ENCODE measurements at regions of chr11 and their contacts with region 1.

Region 1: DNA sequence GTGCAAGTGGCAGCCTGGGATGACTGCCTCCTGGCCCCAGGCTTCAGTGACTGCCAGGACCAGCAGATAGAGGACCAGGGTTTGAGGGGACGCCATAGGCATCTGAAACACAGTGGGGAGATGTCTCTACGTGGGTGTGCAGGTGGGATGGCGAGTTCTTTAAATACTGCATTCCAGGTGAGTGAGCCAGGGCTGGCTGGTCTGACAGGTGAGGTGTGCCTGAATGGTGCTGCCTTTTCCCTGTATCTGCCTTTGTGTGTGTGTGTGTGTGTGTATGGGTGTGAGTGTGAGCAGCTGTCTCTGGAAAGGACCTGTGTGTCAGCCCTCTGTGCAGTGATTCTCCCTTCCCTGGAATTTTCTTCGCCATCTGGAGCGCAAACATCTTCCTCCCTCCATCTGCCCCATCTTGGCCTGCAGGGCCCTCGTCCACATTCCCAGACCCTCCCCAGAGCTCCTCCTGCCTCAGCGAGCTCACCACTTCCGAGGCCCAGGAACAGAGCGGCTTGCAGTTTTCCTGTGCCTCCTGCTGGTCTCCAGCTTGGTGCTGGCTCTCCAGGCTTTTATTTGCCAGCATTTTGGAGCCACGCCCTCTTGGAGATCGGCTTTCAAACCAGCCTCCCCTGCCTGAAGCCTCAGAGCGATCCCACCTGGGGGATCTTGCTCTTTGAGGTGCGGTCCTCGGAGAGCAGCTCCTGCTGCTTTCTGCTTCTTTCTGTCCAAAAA is at the start of gene GPHA2:
- DNase-seq: no peak
- ATAC-seq: no peak
- H3K4me3 ChIP-seq: no peak within 1 kb of the TSS
- H3K4me3 Mint-ChIP-seq: no peak within 1 kb of the TSS
- H3K27ac ChIP-seq: no peak within 1 kb of the TSS
- H3K27ac Mint-ChIP-seq: no peak within 1 kb of the TSS
- H3K4me1 ChIP-seq: no peaks in the 10 kb centered on the region
- H3K4me1 Mint-ChIP-seq: no peaks in the 10 kb centered on the region
- H3K27me3 ChIP-seq: no peaks in the 10 kb centered on the region
- H3K27me3 Mint-ChIP-seq: no peaks in the 10 kb centered on the region
- CTCF ChIP-seq: no peak
- total RNA-seq, gene GPHA2: 0.49 to 0.56 TPM

Region 2: GRCh38 chr11:64036087-64037026 is 899.2 kb before region 1 on chr11:
- CTCF ChIA-PET with region 1: no interaction called
- POLR2A ChIA-PET with region 1: no interaction called
- intact Hi-C with region 1: no loop called
- DNase-seq: no peak
- ATAC-seq: no peak
- H3K4me3 ChIP-seq: no peak overlapping the region
- H3K4me3 Mint-ChIP-seq: no peak overlapping the region
- H3K27ac ChIP-seq: no peak overlapping the region
- H3K27ac Mint-ChIP-seq: no peak overlapping the region
- H3K4me1 ChIP-seq: peaks cover 17% of the 10 kb centered on the region
- H3K4me1 Mint-ChIP-seq: peaks cover 6% of the 10 kb centered on the region
- H3K27me3 ChIP-seq: peaks cover 36 to 53% of the 10 kb centered on the region in 2 experiments
- H3K27me3 Mint-ChIP-seq: peaks cover 44% of the 10 kb centered on the region
- CTCF ChIP-seq: no peak

Region 3: DNA sequence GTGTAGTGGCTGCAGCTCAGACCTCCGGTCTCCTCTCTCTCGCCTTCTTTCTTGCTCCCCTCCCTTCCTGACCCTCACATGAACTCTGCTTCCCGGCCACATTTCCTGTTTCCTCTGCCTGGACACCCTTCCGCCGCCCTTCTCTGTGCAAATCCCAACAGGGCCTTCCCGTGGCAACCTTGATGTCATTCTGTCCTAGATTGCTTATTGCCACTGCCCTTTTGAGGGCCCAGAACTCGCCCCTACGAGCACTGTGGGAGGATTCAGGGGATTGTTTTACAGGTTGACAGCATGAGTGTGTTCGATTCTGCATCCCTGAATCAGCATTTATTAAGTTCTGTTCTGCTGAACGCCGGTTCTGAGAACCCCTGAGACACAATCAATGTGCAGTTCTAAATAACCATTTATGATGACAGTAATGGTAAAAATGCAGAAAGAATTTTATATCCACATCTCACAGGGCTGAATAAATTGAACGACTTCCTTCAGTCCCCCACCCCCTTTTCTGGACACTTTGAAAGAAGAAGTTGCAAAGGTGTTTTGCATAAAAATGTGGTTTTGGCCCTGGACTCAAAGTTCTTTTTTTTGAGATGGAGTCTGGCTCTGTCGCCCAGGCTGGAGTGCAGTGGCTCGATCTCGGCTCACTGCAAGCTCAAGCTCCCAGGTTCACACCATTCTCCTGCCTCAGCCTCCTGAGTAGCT is 54.9 kb after region 1 on chr11:
- CTCF ChIA-PET with region 1: no interaction called
- POLR2A ChIA-PET with region 1: no interaction called
- intact Hi-C with region 1: loop called in 1 of 2 experiments (anchors 5 kb)
- DNase-seq: peak in 1 of 14 experiments; percentile 18
- ATAC-seq: no peak
- H3K4me3 ChIP-seq: no peak overlapping the region
- H3K4me3 Mint-ChIP-seq: no peak overlapping the region
- H3K27ac ChIP-seq: no peak overlapping the region
- H3K27ac Mint-ChIP-seq: no peak overlapping the region
- H3K4me1 ChIP-seq: peaks cover 17% of the 10 kb centered on the region
- H3K4me1 Mint-ChIP-seq: peaks cover 8% of the 10 kb centered on the region
- H3K27me3 ChIP-seq: no peaks in the 10 kb centered on the region
- H3K27me3 Mint-ChIP-seq: peaks cover 7% of the 10 kb centered on the region
- CTCF ChIP-seq: no peak

Region 4: DNA sequence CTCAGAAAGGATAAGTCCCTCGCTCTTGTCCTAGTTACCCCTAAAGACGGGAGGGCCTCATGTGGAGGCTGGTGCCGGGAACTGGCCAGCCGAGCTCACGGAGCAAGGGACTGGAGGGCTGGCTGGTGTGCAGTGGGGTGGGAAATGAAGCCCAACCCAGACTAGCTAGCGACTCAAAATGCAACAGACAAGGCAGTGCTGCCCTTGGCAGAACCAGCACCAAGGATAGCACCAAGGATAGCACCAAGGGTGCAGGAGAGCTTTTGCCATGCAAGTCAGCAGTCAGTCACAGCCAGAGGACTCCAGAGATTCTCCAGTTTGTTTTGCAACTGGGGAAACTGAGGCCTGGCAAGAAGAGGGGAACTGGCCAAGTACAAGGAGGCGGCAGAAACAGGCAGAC is 67.8 kb after region 1 on chr11:
- CTCF ChIA-PET with region 1: no interaction called
- POLR2A ChIA-PET with region 1: no interaction called
- intact Hi-C with region 1: loop called in 1 of 2 experiments (anchors 5 kb)
- DNase-seq: no peak
- ATAC-seq: no peak
- H3K4me3 ChIP-seq: no peak overlapping the region
- H3K4me3 Mint-ChIP-seq: no peak overlapping the region
- H3K27ac ChIP-seq: no peak overlapping the region
- H3K27ac Mint-ChIP-seq: no peak overlapping the region
- H3K4me1 ChIP-seq: peaks cover 10% of the 10 kb centered on the region
- H3K4me1 Mint-ChIP-seq: no peaks in the 10 kb centered on the region
- H3K27me3 ChIP-seq: peaks cover 0 to 2% of the 10 kb centered on the region in 2 experiments
- H3K27me3 Mint-ChIP-seq: no peaks in the 10 kb centered on the region
- CTCF ChIP-seq: no peak